GM12878 (cell line): ENCODE measurements at regions of chrX and their contacts with region 1.

Region 1: GRCh38 chrX:79107891-79108718 is 36.4 kb upstream of the GPR174 start:
- DNase-seq: peak; percentile 55
- ATAC-seq: peak; percentile 91
- H3K4me3 ChIP-seq: no peak overlapping the region
- H3K27ac ChIP-seq: peak overlapping the region; percentile 24
- H3K4me1 ChIP-seq: peaks cover 8% of the 10 kb centered on the region; the same call in 1 of the 2 replicates
- H3K27me3 ChIP-seq: no peaks in the 10 kb centered on the region
- CTCF ChIP-seq: no peak
- EP300 ChIP-seq: peak; percentile 58 to 80; a peak in 2 of 4 replicates
- POLR2A ChIP-seq: no peak
- RAD21 ChIP-seq: no peak

Region 2: GRCh38 chrX:79089896-79090584 is 18.1 kb before region 1 on chrX:
- CTCF ChIA-PET with region 1: interaction called, 5 read pairs
- POLR2A ChIA-PET with region 1: no interaction called
- RAD21 ChIA-PET with region 1: interaction called, 7 read pairs
- SMC1A ChIA-PET with region 1: interaction called, 35 read pairs
- in situ Hi-C with region 1: no loop called
- intact Hi-C with region 1: no loop called
- DNase-seq: no peak
- ATAC-seq: peak; percentile 74
- H3K4me3 ChIP-seq: no peak overlapping the region
- H3K27ac ChIP-seq: no peak overlapping the region
- H3K4me1 ChIP-seq: no peaks in the 10 kb centered on the region
- H3K27me3 ChIP-seq: no peaks in the 10 kb centered on the region
- CTCF ChIP-seq: no peak
- EP300 ChIP-seq: no peak
- POLR2A ChIP-seq: no peak
- RAD21 ChIP-seq: no peak

Region 3: DNA sequence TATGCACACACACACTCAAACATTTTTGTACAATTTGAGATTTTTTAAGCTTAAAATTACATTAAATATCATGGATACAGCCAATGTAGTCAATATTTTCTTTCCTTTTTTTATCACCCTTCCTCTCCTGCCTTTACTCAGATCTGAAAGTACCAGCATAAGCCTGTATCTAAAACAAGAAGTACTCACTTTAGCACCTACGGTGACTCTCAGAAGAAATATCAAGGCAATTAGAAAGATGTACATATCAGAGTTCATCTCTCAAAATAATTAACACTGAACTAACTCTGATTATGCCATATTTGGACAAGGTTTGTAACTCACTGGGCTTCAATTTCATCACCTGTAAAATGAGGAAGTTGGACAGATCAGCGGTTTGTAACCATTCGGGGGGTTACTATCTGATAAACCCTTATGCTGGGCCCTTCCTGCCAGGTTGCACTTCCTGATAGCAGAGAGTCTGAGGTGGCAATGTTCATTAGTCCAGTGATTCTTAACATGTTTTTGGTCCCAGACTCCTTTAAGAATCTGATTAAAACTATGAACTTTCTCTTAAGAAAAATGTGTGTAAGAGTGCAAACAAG is 30.6 kb after region 1 on chrX:
- CTCF ChIA-PET with region 1: interaction called, 15 read pairs
- POLR2A ChIA-PET with region 1: interaction called, 3 read pairs
- RAD21 ChIA-PET with region 1: interaction called, 43 read pairs
- SMC1A ChIA-PET with region 1: interaction called, 128 read pairs
- in situ Hi-C with region 1: no loop called
- intact Hi-C with region 1: loop called (anchors 1 kb)
- DNase-seq: peak; percentile 79
- ATAC-seq: peak; percentile 95
- H3K4me3 ChIP-seq: no peak overlapping the region
- H3K27ac ChIP-seq: peak overlapping the region; percentile 84
- H3K4me1 ChIP-seq: peaks cover 10% of the 10 kb centered on the region; the same call in 1 of the 2 replicates
- H3K27me3 ChIP-seq: no peaks in the 10 kb centered on the region
- CTCF ChIP-seq: no peak
- EP300 ChIP-seq: peak; percentile 78 to 83; a peak in 2 of 4 replicates
- POLR2A ChIP-seq: no peak
- RAD21 ChIP-seq: no peak

Region 4: DNA sequence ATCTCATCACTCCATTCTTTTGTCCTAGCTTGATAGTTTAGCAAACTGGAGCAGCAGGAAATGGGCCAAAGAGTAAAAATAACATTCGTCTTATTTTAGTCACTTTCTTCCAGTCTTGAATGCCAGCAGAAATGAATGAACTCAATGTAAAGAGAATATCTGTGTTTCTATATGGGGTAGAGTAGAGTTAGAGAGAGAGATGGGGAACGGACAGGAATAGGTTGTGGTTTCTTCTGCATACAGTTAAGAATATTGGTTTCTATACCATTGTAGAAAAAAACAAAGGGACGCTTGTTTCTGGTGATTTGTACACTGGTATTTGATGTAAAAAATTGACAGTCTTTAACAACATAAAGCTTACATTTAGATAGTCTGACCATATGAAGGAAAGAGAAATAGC is 45.2 kb after region 1 on chrX:
- CTCF ChIA-PET with region 1: no interaction called
- POLR2A ChIA-PET with region 1: no interaction called
- RAD21 ChIA-PET with region 1: interaction called, 6 read pairs
- SMC1A ChIA-PET with region 1: interaction called, 23 read pairs
- in situ Hi-C with region 1: no loop called
- intact Hi-C with region 1: no loop called
- DNase-seq: no peak
- ATAC-seq: peak; percentile 48
- H3K4me3 ChIP-seq: no peak overlapping the region
- H3K27ac ChIP-seq: peak overlapping the region; percentile 8; the same call in 1 of the 2 replicates
- H3K4me1 ChIP-seq: peaks cover 2% of the 10 kb centered on the region; the same call in 1 of the 2 replicates
- H3K27me3 ChIP-seq: no peaks in the 10 kb centered on the region
- CTCF ChIP-seq: no peak
- EP300 ChIP-seq: no peak
- POLR2A ChIP-seq: no peak
- RAD21 ChIP-seq: no peak

Region 5: DNA sequence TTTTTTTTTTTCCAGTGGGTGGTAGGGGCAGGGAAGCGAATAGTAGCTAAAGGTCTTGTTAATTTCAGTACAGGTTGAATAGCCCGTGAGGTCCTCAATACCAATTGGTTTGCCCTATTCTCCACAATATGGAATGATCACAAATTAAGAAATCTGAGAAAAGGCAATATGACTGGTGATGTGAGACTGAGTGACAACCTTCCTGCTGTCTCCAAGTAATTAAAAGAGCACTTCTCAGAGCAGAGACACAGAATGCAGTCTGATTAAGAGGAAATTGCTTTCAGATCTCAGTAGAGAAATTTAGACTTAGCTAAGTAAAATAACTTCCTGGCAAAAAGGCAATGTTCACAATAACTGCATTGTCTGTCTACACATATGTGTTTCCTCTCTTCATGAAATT is 59.4 kb after region 1 on chrX:
- CTCF ChIA-PET with region 1: no interaction called
- POLR2A ChIA-PET with region 1: interaction called, 14 read pairs
- RAD21 ChIA-PET with region 1: interaction called, 6 read pairs
- SMC1A ChIA-PET with region 1: interaction called, 20 read pairs
- in situ Hi-C with region 1: no loop called
- intact Hi-C with region 1: no loop called
- DNase-seq: no peak
- ATAC-seq: peak; percentile 24; the same call in 2 of the 3 replicates
- H3K4me3 ChIP-seq: no peak overlapping the region
- H3K27ac ChIP-seq: no peak overlapping the region
- H3K4me1 ChIP-seq: peaks cover 7% of the 10 kb centered on the region
- H3K27me3 ChIP-seq: no peaks in the 10 kb centered on the region
- CTCF ChIP-seq: no peak
- EP300 ChIP-seq: no peak
- POLR2A ChIP-seq: no peak
- RAD21 ChIP-seq: no peak